ENCODE measurements at regions of chr19 and their contacts with region 1.

Region 1: DNA sequence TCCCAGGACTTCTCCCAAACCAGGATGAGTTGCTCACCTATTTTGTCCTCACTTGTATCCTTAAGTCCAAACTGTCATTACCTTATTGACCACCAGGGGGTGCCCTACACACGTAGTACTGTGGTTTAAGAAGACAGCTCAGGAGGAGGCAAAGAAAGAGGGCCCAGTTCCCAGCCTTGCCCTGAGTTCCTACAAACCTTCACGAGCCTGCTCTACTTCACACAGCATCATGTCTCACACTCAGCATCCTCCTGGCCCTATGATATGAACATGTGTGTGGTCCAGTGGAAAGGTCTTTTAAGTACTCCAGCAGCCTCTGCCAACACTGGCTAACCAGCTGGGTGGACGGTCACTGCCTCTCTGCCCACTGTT is 8.1 kb upstream of the ZNF784 start:
- DNase-seq: peak; percentile 62 to 95 (median 87)
- ATAC-seq: peak; percentile 43
- H3K4me3 ChIP-seq: no peak overlapping the region
- H3K4me3 Mint-ChIP-seq: peak overlapping the region; percentile 83
- H3K27ac ChIP-seq: no peak overlapping the region
- H3K27ac Mint-ChIP-seq: peak overlapping the region; percentile 55
- H3K4me1 ChIP-seq: peaks cover 49% of the 10 kb centered on the region
- H3K4me1 Mint-ChIP-seq: peaks cover 45% of the 10 kb centered on the region
- H3K27me3 ChIP-seq: no peaks in the 10 kb centered on the region
- H3K27me3 Mint-ChIP-seq: no peaks in the 10 kb centered on the region
- CTCF ChIP-seq: peak; percentile 65

Region 2: GRCh38 chr19:55258828-55259539 is 373.5 kb before region 1 on chr19 and contains the start of gene PPP6R1:
- CTCF ChIA-PET with region 1: no interaction called
- POLR2A ChIA-PET with region 1: interaction called, 3 read pairs
- intact Hi-C with region 1: loop called (anchors 10 kb)
- DNase-seq: peak; percentile 87 to 99 (median 92)
- ATAC-seq: peak; percentile 76
- H3K4me3 ChIP-seq: peak within 1 kb of the TSS; percentile 76
- H3K4me3 Mint-ChIP-seq: peak within 1 kb of the TSS; percentile 91
- H3K27ac ChIP-seq: peak within 1 kb of the TSS; percentile 92 to 93
- H3K27ac Mint-ChIP-seq: peak within 1 kb of the TSS; percentile 97
- H3K4me1 ChIP-seq: peaks cover 52% of the 10 kb centered on the region
- H3K4me1 Mint-ChIP-seq: peaks cover 41% of the 10 kb centered on the region
- H3K27me3 ChIP-seq: no peaks in the 10 kb centered on the region
- H3K27me3 Mint-ChIP-seq: no peaks in the 10 kb centered on the region
- CTCF ChIP-seq: no peak
- total RNA-seq, gene PPP6R1: 172 to 182 TPM

Region 3: GRCh38 chr19:55476100-55476775 is 156.2 kb before region 1 on chr19 and contains the start of gene ZNF628:
- CTCF ChIA-PET with region 1: interaction called, 6 read pairs
- POLR2A ChIA-PET with region 1: interaction called, 12 read pairs
- intact Hi-C with region 1: no loop called
- DNase-seq: peak; percentile 94 to 99 (median 98)
- ATAC-seq: peak; percentile 93
- H3K4me3 ChIP-seq: peak within 1 kb of the TSS; percentile 76
- H3K4me3 Mint-ChIP-seq: peak within 1 kb of the TSS; percentile 91
- H3K27ac ChIP-seq: peak within 1 kb of the TSS; percentile 72 to 77
- H3K27ac Mint-ChIP-seq: peak within 1 kb of the TSS; percentile 93
- H3K4me1 ChIP-seq: peaks cover 26% of the 10 kb centered on the region
- H3K4me1 Mint-ChIP-seq: peaks cover 38% of the 10 kb centered on the region
- H3K27me3 ChIP-seq: no peaks in the 10 kb centered on the region
- H3K27me3 Mint-ChIP-seq: no peaks in the 10 kb centered on the region
- CTCF ChIP-seq: no peak
- total RNA-seq, gene ZNF628: 26.6 to 27.2 TPM

Region 4: DNA sequence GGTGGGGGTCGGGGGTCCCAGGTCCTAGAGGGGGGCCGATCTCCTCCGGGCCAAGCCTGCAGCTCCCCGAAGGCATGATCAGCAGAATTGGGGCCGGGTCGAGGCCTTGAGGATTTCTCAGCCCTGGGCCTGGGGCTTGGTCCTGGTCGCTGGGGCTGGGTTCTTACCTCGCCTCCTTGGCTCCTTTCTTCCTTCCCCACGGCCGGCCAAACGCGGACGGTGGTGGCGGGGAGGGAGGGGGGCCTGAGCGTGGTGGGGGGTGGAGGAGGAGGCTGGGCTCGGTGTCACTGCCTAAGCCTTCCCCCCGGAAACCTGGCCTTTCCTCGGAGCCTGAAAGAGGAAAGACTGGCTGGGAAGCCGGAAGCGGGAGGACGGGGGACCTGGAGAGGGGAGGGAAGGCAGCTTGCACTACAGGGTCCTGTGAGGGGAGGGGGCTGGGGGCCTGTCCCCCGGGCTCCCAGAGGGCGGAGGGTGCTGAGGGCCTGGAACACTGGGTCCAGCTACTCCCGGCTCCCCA is 51.8 kb before region 1 on chr19 and contains the start of gene ZNF579:
- CTCF ChIA-PET with region 1: interaction called, 19 read pairs
- POLR2A ChIA-PET with region 1: interaction called, 17 read pairs
- intact Hi-C with region 1: loop called (anchors 1 to 2 kb)
- DNase-seq: peak; percentile 53 to 84 (median 66)
- ATAC-seq: peak; percentile 69
- H3K4me3 ChIP-seq: peak within 1 kb of the TSS; percentile 78
- H3K4me3 Mint-ChIP-seq: peak within 1 kb of the TSS; percentile 89
- H3K27ac ChIP-seq: peak within 1 kb of the TSS; percentile 52 to 69
- H3K27ac Mint-ChIP-seq: peak within 1 kb of the TSS; percentile 86
- H3K4me1 ChIP-seq: peaks cover 25% of the 10 kb centered on the region
- H3K4me1 Mint-ChIP-seq: peaks cover 31% of the 10 kb centered on the region
- H3K27me3 ChIP-seq: no peaks in the 10 kb centered on the region
- H3K27me3 Mint-ChIP-seq: no peaks in the 10 kb centered on the region
- CTCF ChIP-seq: no peak
- total RNA-seq, gene ZNF579: 6.7 to 7.1 TPM

Region 5: DNA sequence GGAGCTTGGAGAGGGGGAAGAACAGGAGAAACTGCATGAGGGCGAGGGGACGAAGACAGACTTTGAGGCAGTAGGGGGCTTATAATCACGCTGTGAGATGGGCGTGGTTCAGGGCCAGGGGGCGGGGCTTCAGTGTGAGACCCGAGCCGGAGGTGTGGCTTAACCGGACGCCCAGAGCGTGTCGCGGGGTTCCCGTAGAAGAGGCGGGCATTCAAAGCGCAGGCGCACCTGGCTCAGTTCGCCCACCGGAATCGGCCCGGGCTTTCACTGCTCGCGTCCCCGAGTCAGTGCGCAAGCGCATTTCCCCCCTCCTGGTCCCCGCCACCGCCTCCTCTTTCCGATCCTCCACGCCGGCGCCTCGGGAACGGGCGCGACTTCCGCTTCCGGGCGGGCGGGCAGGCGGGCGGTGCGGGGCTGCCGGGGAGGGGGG is 27.2 kb before region 1 on chr19:
- CTCF ChIA-PET with region 1: interaction called, 60 read pairs
- POLR2A ChIA-PET with region 1: interaction called, 50 read pairs
- intact Hi-C with region 1: no loop called
- DNase-seq: peak; percentile 93 to 99 (median 98)
- ATAC-seq: peak; percentile 78
- H3K4me3 ChIP-seq: peak overlapping the region; percentile 64
- H3K4me3 Mint-ChIP-seq: peak overlapping the region; percentile 86
- H3K27ac ChIP-seq: peak overlapping the region; percentile 85 to 92
- H3K27ac Mint-ChIP-seq: peak overlapping the region; percentile 84
- H3K4me1 ChIP-seq: peaks cover 45% of the 10 kb centered on the region
- H3K4me1 Mint-ChIP-seq: peaks cover 54% of the 10 kb centered on the region
- H3K27me3 ChIP-seq: no peaks in the 10 kb centered on the region
- H3K27me3 Mint-ChIP-seq: no peaks in the 10 kb centered on the region
- CTCF ChIP-seq: no peak

Region 6: DNA sequence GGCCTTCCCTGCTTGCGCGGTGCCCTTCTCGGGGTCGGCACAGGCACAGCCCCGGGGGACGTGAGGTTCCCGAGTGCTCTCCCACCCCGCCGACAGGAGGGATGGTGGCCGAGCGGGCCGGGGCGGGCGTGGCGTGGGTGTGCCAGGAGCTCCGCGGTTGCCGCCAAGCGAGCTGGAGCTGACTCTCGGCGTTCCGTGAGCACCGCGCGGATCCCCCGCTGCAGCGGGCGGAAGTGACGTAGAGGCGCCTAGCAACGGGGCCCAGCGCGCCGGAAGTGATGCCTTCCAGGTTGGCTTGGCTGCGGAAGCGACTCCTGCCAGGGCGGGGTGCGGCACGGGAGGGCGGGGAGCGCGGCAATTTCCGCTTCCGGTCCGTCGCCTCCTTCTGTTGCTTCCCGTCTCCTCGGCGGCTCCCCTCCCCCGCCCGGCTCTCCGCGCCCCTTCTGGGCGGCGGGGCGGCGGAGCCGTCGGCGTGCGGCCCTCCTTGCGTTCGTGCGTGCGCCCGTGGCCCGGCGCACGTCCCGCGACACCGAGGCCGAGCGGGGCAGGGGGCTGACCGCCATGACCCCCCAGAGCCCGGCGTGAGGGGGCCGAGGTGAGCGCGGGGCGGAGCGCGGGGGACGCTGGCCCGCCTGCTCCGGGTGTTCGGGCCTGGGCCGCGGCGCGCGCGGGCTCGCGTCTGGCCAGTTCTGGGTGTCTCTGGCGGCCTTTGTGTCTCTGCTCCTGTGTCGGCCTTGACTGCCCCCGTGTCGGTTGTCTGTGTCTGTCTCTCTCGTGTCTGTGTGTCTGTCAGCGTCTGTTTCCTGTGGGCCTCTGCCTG is 42.6 kb after region 1 on chr19 and contains the start of gene EPN1:
- CTCF ChIA-PET with region 1: interaction called, 10 read pairs
- POLR2A ChIA-PET with region 1: interaction called, 4 read pairs
- intact Hi-C with region 1: loop called in 1 of 2 experiments (anchors 2 kb)
- DNase-seq: peak; percentile 95 to 99 (median 97)
- ATAC-seq: peak; percentile 92
- H3K4me3 ChIP-seq: peak within 1 kb of the TSS; percentile 73
- H3K4me3 Mint-ChIP-seq: peak within 1 kb of the TSS; percentile 95
- H3K27ac ChIP-seq: peak within 1 kb of the TSS; percentile 69 to 89
- H3K27ac Mint-ChIP-seq: peak within 1 kb of the TSS; percentile 90
- H3K4me1 ChIP-seq: peaks cover 59% of the 10 kb centered on the region
- H3K4me1 Mint-ChIP-seq: peaks cover 50% of the 10 kb centered on the region
- H3K27me3 ChIP-seq: no peaks in the 10 kb centered on the region
- H3K27me3 Mint-ChIP-seq: no peaks in the 10 kb centered on the region
- CTCF ChIP-seq: no peak
- total RNA-seq, gene EPN1: 39.0 to 40.5 TPM

Measured in CD4-positive, alpha-beta T cell (primary cell).